ENCODE measurements at regions of chr9 and their contacts with region 1.

Region 1: GRCh38 chr9:96854073-96854876 is at the start of gene ZNF782:
- DNase-seq: peak; percentile 91
- CTCF ChIP-seq: no peak

Region 2: DNA sequence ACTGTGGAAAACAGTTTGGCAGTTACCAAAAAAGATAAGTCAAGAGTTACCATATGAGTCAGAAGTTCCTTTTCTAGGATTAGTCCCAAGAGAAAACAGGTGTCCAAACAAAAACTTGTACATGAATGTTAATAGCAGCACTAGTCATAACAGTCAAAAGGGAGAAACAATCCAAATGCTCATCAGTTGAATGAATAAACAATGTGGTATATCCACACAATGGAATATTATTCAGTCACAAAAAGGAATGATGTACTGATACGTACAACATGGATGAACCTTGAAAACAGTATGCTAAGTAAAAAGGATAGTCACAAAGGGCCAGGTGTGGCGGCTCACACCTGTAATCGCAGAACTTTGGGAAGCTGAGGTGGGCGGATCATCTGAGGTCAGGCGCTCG is 84.3 kb before region 1 on chr9:
- CTCF ChIA-PET with region 1: no interaction called
- POLR2A ChIA-PET with region 1: no interaction called
- DNase-seq: no peak
- CTCF ChIP-seq: no peak

Region 3: DNA sequence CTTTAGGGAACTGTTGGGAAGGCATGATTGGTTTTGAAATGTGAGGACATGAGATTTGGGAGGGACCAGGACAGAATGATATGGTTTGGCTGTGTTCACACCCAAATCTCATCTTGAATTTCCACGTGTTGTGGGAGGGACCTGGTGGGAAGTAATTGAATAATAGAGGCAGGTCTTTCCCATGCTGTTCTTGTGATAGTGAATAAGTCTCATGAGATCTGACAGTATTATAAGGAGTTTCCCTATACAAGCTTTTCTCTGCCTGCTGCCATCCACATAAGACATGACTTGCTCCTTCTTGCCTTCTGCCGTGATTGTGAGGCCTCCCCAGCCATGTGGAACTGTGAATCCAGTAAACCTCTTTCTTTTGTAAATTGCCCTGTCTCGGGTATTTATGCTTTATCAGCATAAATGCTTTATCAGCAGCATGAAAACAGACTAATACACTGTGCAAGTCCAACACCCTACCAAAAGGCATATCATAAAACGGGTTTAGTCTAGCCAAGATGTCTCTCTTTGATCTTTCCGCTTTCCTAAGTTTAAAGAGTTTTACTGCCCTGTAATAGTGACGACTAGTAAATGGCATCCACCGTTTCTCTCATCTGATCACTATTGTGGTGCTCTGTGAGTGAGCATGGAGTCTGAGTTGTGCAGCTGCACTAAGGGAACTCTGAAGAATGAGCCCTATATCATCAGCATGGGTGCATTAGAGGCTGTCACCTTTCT is 13.0 kb after region 1 on chr9:
- CTCF ChIA-PET with region 1: interaction called, 81 read pairs
- POLR2A ChIA-PET with region 1: no interaction called
- DNase-seq: no peak
- CTCF ChIP-seq: no peak

Region 4: GRCh38 chr9:97109194-97109811 is 255.0 kb after region 1 on chr9:
- CTCF ChIA-PET with region 1: interaction called, 15 read pairs
- POLR2A ChIA-PET with region 1: no interaction called
- DNase-seq: peak; percentile 44
- CTCF ChIP-seq: peak; percentile 69

Region 5: DNA sequence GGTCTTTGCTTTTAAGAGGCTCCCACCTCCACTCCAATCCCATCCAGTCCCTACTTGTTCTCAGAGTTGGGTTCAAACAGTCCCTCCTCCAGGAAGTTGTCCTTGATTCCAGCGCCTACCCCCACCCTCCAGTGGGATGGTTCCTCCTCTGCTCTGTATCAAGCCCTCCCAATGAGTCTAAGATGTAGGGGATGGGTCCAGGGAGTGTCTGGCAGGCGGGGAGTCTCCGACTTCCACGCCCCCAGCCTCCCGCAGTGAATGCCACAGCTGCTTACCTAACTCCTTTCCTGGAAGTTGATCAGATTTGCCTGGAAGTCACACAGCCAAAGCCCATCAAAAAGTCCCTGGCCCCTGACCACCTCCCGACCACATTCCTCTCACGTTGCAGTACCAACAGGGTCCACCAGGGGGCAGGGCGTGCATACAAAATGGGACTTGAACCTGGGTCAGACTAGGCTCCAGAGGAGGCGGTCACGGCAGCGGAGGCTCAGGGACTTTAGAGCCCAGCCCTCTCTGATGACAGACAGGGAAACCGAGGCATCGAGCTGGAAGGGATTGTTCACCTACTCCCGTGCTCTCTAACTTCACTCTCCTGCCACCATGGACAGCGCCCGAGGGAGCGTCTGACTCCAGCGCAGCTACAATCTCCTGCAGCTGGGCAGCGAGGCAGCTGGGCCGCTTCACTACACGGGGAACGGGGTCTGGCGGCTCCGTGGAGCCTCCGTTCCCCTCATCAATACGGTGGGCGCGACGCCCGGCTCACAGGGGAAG is 532.6 kb after region 1 on chr9:
- CTCF ChIA-PET with region 1: interaction called, 24 read pairs
- POLR2A ChIA-PET with region 1: no interaction called
- DNase-seq: peak; percentile 84
- CTCF ChIP-seq: peak; percentile 95

Region 6: DNA sequence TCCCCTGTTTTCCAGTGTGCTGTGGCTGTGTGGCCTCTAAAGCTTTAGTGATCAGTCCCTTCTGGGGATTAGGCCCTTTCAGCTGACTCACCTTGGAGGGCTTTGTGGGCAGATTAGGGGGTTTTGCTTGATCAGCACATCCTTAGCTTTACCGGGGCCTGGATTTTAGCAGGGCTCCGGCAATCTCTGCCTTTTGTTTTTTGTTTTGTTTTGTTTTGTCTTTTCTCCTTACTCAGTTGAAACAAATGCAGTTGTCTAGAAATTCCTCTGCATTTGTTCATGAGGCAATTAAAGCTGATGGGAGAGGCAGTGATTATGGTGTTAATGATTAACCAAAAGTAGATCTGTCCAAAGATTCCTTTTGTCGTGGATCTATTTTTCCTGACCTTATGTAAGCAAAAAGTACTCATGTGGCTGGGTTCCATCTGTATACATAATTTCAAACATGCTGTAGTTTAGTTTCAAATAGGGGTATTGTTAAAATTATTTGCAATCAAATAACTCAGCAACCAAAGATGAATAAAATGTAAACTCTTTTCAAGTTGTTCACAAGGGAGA is 552.4 kb after region 1 on chr9:
- CTCF ChIA-PET with region 1: interaction called, 63 read pairs
- POLR2A ChIA-PET with region 1: no interaction called
- DNase-seq: no peak
- CTCF ChIP-seq: no peak

Measured in GM10248 (cell line).